ENCODE measurements at regions of chr11 and their contacts with region 1.

Region 1: DNA sequence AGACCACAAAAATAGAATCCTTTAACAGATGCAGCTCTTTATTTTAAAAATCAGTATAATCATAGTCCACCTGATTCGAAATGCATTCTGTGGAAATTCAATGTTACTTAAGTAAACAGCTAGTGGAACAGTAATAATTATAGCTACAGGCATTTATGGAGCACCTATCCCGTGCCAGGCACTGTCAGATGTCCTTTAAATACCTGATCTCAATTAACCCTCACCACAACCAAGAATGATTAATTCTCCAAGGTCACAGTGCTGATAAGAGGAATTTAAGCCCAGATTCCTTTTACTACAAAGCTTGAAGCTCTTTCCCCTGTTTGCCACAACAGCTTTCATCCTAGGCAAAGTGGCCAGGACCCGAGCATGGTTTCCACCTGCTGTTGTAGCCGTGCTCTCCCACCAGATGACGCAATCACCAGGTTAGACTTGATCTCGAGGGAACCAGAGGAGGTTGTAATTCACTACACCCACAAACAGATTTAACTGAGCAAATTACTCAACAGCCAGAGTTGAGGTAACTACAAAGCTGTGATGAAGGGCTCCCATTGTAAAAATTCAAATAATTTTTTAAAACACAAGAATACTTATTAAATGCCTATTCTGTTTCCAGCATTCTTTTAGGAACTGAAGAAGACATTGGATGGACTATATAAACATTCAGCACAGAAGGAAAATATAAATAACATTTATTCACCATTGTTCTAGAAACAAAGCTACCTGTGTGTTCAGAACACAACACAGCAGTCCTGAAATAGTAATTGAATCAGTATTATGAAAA is 10.3 kb downstream of the PRDM10 start:
- DNase-seq: peak; percentile 61
- H3K4me3 Mint-ChIP-seq: no peak overlapping the region
- H3K27ac Mint-ChIP-seq: no peak overlapping the region
- H3K4me1 Mint-ChIP-seq: peaks cover 11% of the 10 kb centered on the region
- H3K27me3 Mint-ChIP-seq: no peaks in the 10 kb centered on the region
- CTCF ChIP-seq: no peak

Region 2: DNA sequence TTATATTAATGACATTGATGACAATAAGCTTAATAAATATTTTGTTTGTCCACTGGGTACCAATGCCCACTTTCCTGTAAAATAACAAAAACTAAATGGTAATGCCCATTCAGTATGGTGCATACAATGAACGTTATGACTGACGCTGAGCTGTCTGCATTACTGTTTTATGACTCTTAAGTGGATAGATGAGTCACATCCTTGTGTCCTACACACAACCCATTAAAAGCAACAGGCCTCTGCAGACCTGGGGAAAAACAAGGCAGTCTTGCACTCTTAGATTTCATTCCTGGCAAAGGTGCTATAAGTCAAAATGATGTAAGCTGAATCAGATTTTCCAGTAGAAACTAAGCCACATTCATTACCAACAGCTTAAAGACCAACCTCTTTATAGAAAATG is 353.1 kb before region 1 on chr11:
- CTCF ChIA-PET with region 1: no interaction called
- intact Hi-C with region 1: no loop called
- DNase-seq: peak; percentile 19
- H3K4me3 Mint-ChIP-seq: no peak overlapping the region
- H3K27ac Mint-ChIP-seq: peak overlapping the region; percentile 54
- H3K4me1 Mint-ChIP-seq: peaks cover 41% of the 10 kb centered on the region
- H3K27me3 Mint-ChIP-seq: no peaks in the 10 kb centered on the region
- CTCF ChIP-seq: no peak

Region 3: DNA sequence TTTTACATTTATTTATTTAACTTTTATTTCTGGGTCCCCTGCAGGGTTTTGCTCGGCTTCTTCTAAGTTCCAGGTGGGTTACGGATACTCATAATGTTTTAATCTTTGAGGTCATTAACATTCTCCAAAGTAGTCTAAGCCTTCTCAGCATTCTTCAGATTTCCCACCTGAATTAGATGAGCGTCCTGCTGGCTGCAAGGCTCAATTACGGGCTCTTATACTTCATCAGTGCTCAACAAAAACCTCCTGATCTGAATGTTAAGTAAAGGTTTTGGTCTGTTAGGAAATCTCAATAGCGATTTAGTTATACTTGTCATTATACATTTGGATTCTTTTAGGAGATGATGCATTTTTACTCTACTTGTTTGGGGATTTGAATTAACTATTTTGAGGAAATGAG is 69.7 kb before region 1 on chr11:
- CTCF ChIA-PET with region 1: interaction called, 3 read pairs
- intact Hi-C with region 1: loop called (anchors 10 kb)
- DNase-seq: no peak
- H3K4me3 Mint-ChIP-seq: no peak overlapping the region
- H3K27ac Mint-ChIP-seq: no peak overlapping the region
- H3K4me1 Mint-ChIP-seq: peaks cover 8% of the 10 kb centered on the region
- H3K27me3 Mint-ChIP-seq: no peaks in the 10 kb centered on the region
- CTCF ChIP-seq: no peak

Region 4: GRCh38 chr11:129973068-129973467 is 19.3 kb before region 1 on chr11:
- CTCF ChIA-PET with region 1: no interaction called
- intact Hi-C with region 1: no loop called
- DNase-seq: no peak
- H3K4me3 Mint-ChIP-seq: no peak overlapping the region
- H3K27ac Mint-ChIP-seq: no peak overlapping the region
- H3K4me1 Mint-ChIP-seq: peaks cover 14% of the 10 kb centered on the region
- H3K27me3 Mint-ChIP-seq: no peaks in the 10 kb centered on the region
- CTCF ChIP-seq: no peak

Region 5: DNA sequence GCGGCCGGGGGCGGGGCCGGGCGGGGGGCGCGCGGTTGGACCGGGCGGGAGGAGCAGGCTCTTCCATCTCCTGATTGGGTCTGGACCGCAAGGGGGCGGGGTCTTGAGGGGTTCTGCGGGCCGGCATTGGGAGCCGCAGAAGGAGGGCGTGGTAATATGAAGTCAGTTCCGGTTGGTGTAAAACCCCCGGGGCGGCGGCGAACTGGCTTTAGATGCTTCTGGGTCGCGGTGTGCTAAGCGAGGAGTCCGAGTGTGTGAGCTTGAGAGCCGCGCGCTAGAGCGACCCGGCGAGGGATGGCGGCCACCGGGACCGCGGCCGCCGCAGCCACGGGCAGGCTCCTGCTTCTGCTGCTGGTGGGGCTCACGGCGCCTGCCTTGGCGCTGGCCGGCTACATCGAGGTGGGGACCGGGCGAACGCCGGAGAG is 77.3 kb after region 1 on chr11 and contains the start of gene APLP2:
- CTCF ChIA-PET with region 1: interaction called, 3 read pairs
- intact Hi-C with region 1: loop called (anchors 2 kb)
- DNase-seq: peak; percentile 97
- H3K4me3 Mint-ChIP-seq: peak within 1 kb of the TSS; percentile 92
- H3K27ac Mint-ChIP-seq: peak within 1 kb of the TSS; percentile 85
- H3K4me1 Mint-ChIP-seq: peaks cover 26% of the 10 kb centered on the region
- H3K27me3 Mint-ChIP-seq: no peaks in the 10 kb centered on the region
- CTCF ChIP-seq: no peak
- total RNA-seq, gene APLP2: 446 and 447 TPM in 2 replicates

Region 6: DNA sequence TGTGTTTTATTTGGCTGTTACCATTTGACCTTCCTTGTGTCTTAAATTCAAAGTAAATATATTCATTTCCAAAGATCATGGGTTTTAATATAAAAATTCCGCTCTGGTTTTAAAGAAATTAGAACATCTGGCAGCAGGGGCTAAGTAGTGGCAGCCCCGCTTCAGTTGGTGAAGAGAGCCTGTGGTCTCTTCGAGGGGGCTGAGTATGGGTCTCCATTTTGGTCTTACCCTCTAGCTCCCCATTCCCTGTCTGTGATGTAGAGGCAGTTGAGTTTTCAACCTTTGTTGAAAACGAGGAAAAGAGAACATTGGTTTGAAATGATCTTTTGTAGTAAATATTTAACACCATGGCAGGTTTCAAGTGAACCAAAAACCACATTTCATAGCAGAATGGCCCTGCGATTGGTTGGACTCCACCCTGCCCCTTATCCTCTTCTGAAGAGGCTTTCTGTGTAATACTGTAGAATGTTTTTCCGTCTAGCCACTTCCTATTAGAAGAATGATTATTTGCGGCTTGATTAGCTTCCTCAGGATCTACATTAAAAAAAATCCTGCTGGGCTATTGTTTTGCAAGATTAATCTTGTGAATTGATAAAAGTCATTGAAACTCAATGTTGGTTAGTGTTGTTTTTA is 95.1 kb after region 1 on chr11:
- CTCF ChIA-PET with region 1: no interaction called
- intact Hi-C with region 1: loop called (anchors 5 kb)
- DNase-seq: peak; percentile 26
- H3K4me3 Mint-ChIP-seq: no peak overlapping the region
- H3K27ac Mint-ChIP-seq: no peak overlapping the region
- H3K4me1 Mint-ChIP-seq: peaks cover 45% of the 10 kb centered on the region
- H3K27me3 Mint-ChIP-seq: no peaks in the 10 kb centered on the region
- CTCF ChIP-seq: no peak

Region 7: DNA sequence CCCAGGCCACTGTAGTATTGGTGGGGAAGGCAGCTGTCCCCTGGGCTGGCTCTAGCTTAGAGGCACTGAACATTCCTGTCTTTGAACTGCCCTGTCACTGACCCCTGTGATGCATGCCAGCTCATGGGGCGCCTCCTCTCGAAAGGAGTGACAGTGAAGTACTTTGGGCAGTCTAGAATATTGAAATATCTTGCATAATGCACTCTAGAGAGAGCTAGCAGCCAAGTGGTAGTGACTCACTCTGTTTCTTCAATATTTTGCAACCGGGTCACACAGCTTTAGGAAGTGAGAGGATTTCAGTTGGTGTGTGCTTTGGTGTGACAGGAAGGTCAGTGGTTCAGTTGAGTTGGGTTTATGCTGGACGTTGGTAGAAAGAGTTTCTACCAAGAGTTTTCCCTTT is 131.7 kb after region 1 on chr11:
- CTCF ChIA-PET with region 1: interaction called, 10 read pairs
- intact Hi-C with region 1: no loop called
- DNase-seq: peak; percentile 72
- H3K4me3 Mint-ChIP-seq: peak overlapping the region; percentile 34
- H3K27ac Mint-ChIP-seq: peak overlapping the region; percentile 76
- H3K4me1 Mint-ChIP-seq: peaks cover 43% of the 10 kb centered on the region
- H3K27me3 Mint-ChIP-seq: no peaks in the 10 kb centered on the region
- CTCF ChIP-seq: no peak

Region 8: GRCh38 chr11:130131961-130132850 is 139.9 kb after region 1 on chr11:
- CTCF ChIA-PET with region 1: interaction called, 27 read pairs
- intact Hi-C with region 1: loop called (anchors 1 kb)
- DNase-seq: peak; percentile 48
- H3K4me3 Mint-ChIP-seq: no peak overlapping the region
- H3K27ac Mint-ChIP-seq: no peak overlapping the region
- H3K4me1 Mint-ChIP-seq: no peaks in the 10 kb centered on the region
- H3K27me3 Mint-ChIP-seq: no peaks in the 10 kb centered on the region
- CTCF ChIP-seq: peak; percentile 50

Measured in Calu3 (cell line).